GM12878 (cell line): ENCODE measurements at regions of chr11 and their contacts with region 1.

Region 1: DNA sequence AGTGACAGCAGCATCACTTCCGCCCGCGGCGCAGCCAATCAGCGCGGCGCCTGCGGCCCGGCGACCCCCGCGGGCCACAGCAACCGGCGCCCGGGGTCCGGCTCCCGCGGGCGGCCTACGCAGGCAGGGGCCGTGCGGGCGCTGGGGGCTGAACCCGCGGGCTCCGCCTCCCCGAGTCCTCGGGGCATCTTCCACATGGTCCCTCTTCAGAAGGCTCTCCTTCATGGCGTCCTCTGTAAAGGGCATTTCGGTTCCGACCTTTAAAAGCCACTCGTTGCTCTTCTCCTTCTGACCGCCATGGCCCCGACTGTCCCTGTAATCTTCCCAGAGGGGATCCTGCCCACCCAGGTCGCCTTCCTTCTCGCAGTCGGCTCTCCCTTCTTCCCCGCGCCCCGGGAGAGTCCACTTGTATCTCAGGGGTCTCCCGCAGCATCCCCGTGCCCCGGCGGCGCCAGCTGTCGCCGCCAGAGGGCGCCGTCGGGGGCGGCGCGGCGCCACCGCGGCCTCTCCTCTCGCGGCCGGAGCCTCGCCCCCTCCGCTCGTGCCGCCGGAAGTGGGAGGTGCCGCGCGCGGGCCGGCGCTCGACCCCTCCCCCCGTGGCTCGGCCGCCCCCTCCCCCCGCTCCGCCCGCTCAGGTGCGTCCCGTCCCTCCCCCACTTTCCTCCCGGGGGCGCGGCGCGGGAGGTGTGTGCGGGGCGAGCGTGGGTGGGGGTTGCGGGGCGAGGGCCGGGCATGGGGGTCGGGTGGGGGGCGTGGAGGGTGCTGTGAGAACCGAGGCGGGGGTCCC is at the start of gene RNF214:
- DNase-seq: peak; percentile 20
- ATAC-seq: peak; percentile 82
- H3K4me3 ChIP-seq: peak within 1 kb of the TSS; percentile 89
- H3K27ac ChIP-seq: peak within 1 kb of the TSS; percentile 87
- H3K4me1 ChIP-seq: peaks cover 9% of the 10 kb centered on the region
- H3K27me3 ChIP-seq: no peaks in the 10 kb centered on the region
- CTCF ChIP-seq: peak; percentile 77 to 88 (median 85); a peak in 5 of 6 replicates
- EP300 ChIP-seq: no peak
- POLR2A ChIP-seq: peak; percentile 77
- RAD21 ChIP-seq: peak; percentile 31; the same call in 1 of the 2 replicates
- polyA plus RNA-seq, gene RNF214: 4.8 to 6.2 TPM

Region 2: GRCh38 chr11:117143871-117144476 is 88.3 kb before region 1 on chr11 and contains the start of gene PAFAH1B2:
- CTCF ChIA-PET with region 1: interaction called, 13 read pairs
- POLR2A ChIA-PET with region 1: no interaction called
- RAD21 ChIA-PET with region 1: interaction called, 12 read pairs
- SMC1A ChIA-PET with region 1: interaction called, 6 read pairs
- in situ Hi-C with region 1: no loop called
- intact Hi-C with region 1: no loop called
- DNase-seq: peak; percentile 82
- ATAC-seq: peak; percentile 96
- H3K4me3 ChIP-seq: peak within 1 kb of the TSS; percentile 92
- H3K27ac ChIP-seq: peak within 1 kb of the TSS; percentile 80
- H3K4me1 ChIP-seq: peaks cover 7% of the 10 kb centered on the region
- H3K27me3 ChIP-seq: no peaks in the 10 kb centered on the region
- CTCF ChIP-seq: no peak
- EP300 ChIP-seq: no peak
- POLR2A ChIP-seq: peak; percentile 82
- RAD21 ChIP-seq: no peak
- polyA plus RNA-seq, gene PAFAH1B2: 17.6 to 64.8 TPM

Region 3: DNA sequence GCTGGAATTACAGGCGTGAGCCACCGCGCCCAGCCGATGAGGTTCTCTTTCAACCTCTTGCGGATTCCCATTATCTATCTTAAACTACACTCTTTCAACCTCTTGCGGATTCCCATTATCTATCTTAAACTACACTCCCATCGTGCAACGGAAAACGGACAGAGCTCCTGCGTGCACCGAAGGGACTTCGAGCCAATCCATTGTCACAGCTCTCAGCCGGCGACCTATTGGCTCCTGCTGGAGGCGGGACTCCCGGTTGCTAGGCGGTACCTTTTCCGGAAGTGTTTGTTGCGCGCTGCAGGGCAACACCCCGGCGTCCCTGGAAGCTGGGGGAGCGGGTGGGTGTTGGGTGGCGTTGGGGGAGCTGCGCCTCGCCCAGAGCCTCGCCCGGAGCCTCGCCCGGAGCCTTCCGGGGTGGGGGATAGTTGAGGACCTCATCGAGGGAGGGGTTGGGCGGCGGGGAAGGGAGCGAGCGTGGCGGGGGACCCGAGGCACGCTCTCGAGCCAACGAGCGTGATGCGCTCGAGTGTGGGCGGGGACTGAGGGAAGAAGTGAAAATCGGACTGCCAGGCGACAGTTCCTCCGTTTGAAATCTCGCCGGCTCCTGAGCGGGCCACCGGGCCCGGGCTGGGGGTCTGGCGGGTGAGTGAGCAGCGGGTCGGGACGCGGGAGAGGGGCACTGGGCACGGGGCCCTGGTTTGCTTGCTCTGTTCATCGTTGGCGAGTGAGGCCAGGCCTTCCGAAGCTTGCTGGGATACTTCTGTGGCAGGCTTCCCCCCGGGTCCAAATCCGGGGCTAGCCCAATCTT is 95.5 kb after region 1 on chr11 and contains the start of gene CEP164:
- CTCF ChIA-PET with region 1: interaction called, 7 read pairs
- POLR2A ChIA-PET with region 1: interaction called, 3 read pairs
- RAD21 ChIA-PET with region 1: interaction called, 8 read pairs
- SMC1A ChIA-PET with region 1: interaction called, 5 read pairs
- in situ Hi-C with region 1: no loop called
- intact Hi-C with region 1: loop called (anchors 2 kb)
- DNase-seq: peak; percentile 89
- ATAC-seq: peak; percentile 98
- H3K4me3 ChIP-seq: peak within 1 kb of the TSS; percentile 82
- H3K27ac ChIP-seq: peak within 1 kb of the TSS; percentile 39
- H3K4me1 ChIP-seq: no peaks in the 10 kb centered on the region; the same call in 1 of the 2 replicates
- H3K27me3 ChIP-seq: no peaks in the 10 kb centered on the region
- CTCF ChIP-seq: no peak
- EP300 ChIP-seq: no peak
- POLR2A ChIP-seq: peak; percentile 85
- RAD21 ChIP-seq: no peak
- polyA plus RNA-seq, gene CEP164: 4.2 to 6.7 TPM

Region 4: DNA sequence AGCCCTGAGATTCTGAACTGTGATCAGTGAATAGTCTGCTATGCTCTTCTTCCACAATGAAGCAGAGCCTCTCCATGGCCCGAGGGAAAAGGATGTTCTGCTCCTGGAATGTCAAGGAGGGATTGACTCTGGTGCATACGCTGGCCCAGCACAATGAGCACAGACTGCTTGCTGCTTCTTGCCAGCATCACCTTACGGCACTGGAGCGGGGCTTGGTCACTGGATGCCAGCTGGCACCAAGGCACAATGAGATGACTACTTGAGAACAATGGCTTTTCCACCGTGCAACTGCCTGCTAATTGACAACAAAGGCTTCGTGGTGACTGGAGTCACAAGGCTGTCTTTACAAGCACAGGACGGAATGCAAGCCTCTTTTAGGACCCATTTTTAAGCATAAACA is 425.5 kb after region 1 on chr11:
- CTCF ChIA-PET with region 1: no interaction called
- POLR2A ChIA-PET with region 1: no interaction called
- RAD21 ChIA-PET with region 1: no interaction called
- SMC1A ChIA-PET with region 1: no interaction called
- in situ Hi-C with region 1: no loop called
- intact Hi-C with region 1: no loop called
- DNase-seq: no peak
- ATAC-seq: no peak
- H3K4me3 ChIP-seq: no peak overlapping the region
- H3K27ac ChIP-seq: no peak overlapping the region
- H3K4me1 ChIP-seq: no peaks in the 10 kb centered on the region
- H3K27me3 ChIP-seq: peaks cover 4 to 5% of the 10 kb centered on the region in 2 experiments
- CTCF ChIP-seq: no peak
- EP300 ChIP-seq: no peak
- POLR2A ChIP-seq: no peak
- RAD21 ChIP-seq: no peak